ENCODE measurements at regions of chr5 and their contacts with region 1.

Region 1: GRCh38 chr5:95846554-95847260 is 24.2 kb upstream of the GLRX start:
- DNase-seq: peak; percentile 54 to 75 (median 74)
- H3K4me3 ChIP-seq: no peak overlapping the region
- H3K4me3 Mint-ChIP-seq: no peak overlapping the region
- H3K27ac ChIP-seq: no peak overlapping the region
- H3K27ac Mint-ChIP-seq: peak overlapping the region in 1 of 7 donors; percentile 40
- H3K4me1 ChIP-seq: peaks cover 26 to 28% of the 10 kb centered on the region in 2 donors
- H3K4me1 Mint-ChIP-seq: peaks cover 39% of the 10 kb centered on the region
- H3K27me3 ChIP-seq: no peaks in the 10 kb centered on the region
- H3K27me3 Mint-ChIP-seq: peaks cover 0 to 2% (median 1%) of the 10 kb centered on the region in 3 donors
- CTCF ChIP-seq: peak; percentile 93

Region 2: DNA sequence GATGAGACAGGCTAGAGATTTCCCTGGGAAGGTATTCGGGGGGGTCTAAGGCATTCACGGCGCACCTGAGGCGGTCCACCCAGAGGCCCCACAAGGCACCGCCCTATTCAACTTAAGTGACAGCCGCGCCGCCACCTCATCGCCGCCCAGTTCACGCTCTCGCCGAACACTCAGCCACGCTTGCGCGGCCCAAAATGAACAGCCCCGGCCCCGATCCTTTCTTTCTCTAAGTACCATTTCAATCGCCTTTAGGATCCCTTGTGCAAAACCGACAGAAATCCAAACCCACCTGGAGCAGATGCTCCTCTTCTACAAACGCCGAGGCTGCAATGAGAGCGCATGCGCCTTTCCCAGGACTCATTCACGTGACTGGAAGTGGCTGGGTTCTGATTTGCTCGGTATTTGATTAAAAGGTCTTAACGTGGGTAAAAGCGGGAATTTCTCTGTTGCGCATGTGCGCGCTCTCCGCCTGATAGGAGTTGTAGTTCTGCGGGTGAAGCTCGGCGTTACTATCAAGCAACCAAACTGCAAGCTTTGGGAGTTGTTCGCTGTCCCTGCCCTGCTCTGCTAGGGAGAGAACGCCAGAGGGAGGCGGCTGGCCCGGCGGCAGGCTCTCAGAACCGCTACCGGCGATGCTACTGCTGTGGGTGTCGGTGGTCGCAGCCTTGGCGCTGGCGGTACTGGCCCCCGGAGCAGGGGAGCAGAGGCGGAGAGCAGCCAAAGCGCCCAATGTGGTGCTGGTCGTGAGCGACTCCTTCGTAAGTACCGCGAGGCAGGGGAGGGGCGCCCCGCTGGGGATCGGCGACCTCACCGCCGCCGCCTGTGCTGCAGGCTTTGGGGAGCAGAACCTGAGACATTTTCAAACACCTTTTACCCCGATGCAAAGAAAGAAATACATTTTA is 291.8 kb before region 1 on chr5 and contains the starts of genes ARSK and SKIC3:
- intact Hi-C with region 1: loop called in 1 of 2 experiments (anchors 5 kb)
- DNase-seq: peak; percentile 96 to 98 (median 96)
- H3K4me3 ChIP-seq: peak within 1 kb of the TSS; percentile 60 to 85 (median 65)
- H3K4me3 Mint-ChIP-seq: peak within 1 kb of the TSS; percentile 92 to 96
- H3K27ac ChIP-seq: peak within 1 kb of the TSS; percentile 71 to 75
- H3K27ac Mint-ChIP-seq: peak within 1 kb of the TSS; percentile 82 to 98 (median 90)
- H3K4me1 ChIP-seq: peaks cover 20 to 25% of the 10 kb centered on the region in 2 donors
- H3K4me1 Mint-ChIP-seq: peaks cover 29% of the 10 kb centered on the region
- H3K27me3 ChIP-seq: no peaks in the 10 kb centered on the region
- H3K27me3 Mint-ChIP-seq: no peaks in the 10 kb centered on the region
- CTCF ChIP-seq: peak; percentile 21
- polyA plus RNA-seq, gene ARSK: 0.67 to 1.3 (median 1.3) TPM
- polyA plus RNA-seq, gene SKIC3: 13.7 to 24.6 (median 17.6) TPM

Region 3: GRCh38 chr5:95646554-95647431 is 199.9 kb before region 1 on chr5 and contains the start of gene RFESD:
- intact Hi-C with region 1: loop called (anchors 5 kb)
- DNase-seq: peak; percentile 96 to 97 (median 97)
- H3K4me3 ChIP-seq: peak within 1 kb of the TSS; percentile 47 to 82 (median 50)
- H3K4me3 Mint-ChIP-seq: peak within 1 kb of the TSS; percentile 84 to 89
- H3K27ac ChIP-seq: peak within 1 kb of the TSS; percentile 49 to 82
- H3K27ac Mint-ChIP-seq: peak within 1 kb of the TSS; percentile 78 to 92 (median 86)
- H3K4me1 ChIP-seq: peaks cover 12 to 15% of the 10 kb centered on the region in 2 donors
- H3K4me1 Mint-ChIP-seq: peaks cover 13% of the 10 kb centered on the region
- H3K27me3 ChIP-seq: no peaks in the 10 kb centered on the region
- H3K27me3 Mint-ChIP-seq: peaks cover 0 to 1% (median 0%) of the 10 kb centered on the region in 3 donors
- CTCF ChIP-seq: no peak
- polyA plus RNA-seq, gene RFESD: 0.15 to 1.4 (median 0.24) TPM

Region 4: DNA sequence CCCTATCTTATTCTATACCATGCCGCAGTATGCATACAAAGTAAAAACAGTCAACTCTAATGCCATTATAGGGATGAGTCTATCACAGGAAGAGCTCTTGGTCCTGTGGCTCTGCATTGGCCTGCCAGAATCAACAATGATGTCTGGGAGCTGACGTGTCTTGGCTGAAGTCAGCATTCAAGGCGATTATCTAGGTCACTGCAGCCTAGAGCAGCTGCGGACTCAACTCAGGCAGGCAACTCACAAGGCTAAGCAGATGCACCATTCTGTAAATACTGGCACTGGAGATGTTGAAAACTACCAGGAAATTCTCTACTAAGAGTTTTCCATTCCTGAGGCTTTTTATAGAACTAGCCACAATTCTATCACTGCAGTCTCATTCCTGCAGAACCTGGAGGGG is 177.2 kb before region 1 on chr5:
- intact Hi-C with region 1: loop called in 1 of 2 experiments (anchors 5 kb)
- DNase-seq: no peak
- H3K4me3 ChIP-seq: no peak overlapping the region
- H3K4me3 Mint-ChIP-seq: no peak overlapping the region
- H3K27ac ChIP-seq: no peak overlapping the region
- H3K27ac Mint-ChIP-seq: peak overlapping the region in 1 of 7 donors; percentile 68
- H3K4me1 ChIP-seq: peaks cover 7 to 10% of the 10 kb centered on the region in 2 donors
- H3K4me1 Mint-ChIP-seq: peaks cover 11% of the 10 kb centered on the region
- H3K27me3 ChIP-seq: no peaks in the 10 kb centered on the region
- H3K27me3 Mint-ChIP-seq: no peaks in the 10 kb centered on the region
- CTCF ChIP-seq: no peak

Region 5: DNA sequence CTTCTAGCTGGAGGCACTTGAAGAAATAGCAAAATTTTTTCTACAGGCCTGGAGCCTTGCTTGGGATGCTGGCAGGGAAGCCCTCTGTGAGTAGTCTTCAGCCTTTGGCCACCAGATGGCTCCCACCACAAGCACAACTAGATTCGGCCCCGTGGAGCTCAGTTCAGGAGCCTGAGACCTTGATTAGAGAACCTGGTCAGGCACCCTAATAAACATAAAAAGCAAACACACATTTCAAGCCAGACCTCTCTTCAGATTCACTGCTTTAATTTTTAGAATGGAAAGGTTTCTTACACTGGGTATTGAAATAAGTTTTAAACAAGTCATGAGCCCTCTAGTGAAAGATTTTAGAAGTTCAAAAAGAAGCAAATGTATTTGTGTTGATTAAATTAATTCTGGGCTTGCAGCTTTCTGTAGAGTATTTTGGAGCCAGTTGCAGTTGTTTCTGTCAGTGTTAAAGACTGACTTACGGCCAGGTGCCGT is 65.6 kb before region 1 on chr5:
- intact Hi-C with region 1: loop called (anchors 2 kb)
- DNase-seq: peak; percentile 65 to 79 (median 78)
- H3K4me3 ChIP-seq: peak overlapping the region in 1 of 3 experiments; percentile 58
- H3K4me3 Mint-ChIP-seq: peak overlapping the region; percentile 55 to 77
- H3K27ac ChIP-seq: peak overlapping the region in 1 of 2 donors; percentile 66
- H3K27ac Mint-ChIP-seq: peak overlapping the region; percentile 22 to 88 (median 77)
- H3K4me1 ChIP-seq: peaks cover 26 to 31% of the 10 kb centered on the region in 2 donors
- H3K4me1 Mint-ChIP-seq: peaks cover 30% of the 10 kb centered on the region
- H3K27me3 ChIP-seq: no peaks in the 10 kb centered on the region
- H3K27me3 Mint-ChIP-seq: no peaks in the 10 kb centered on the region
- CTCF ChIP-seq: peak; percentile 96

Region 6: GRCh38 chr5:95808686-95809413 is 37.9 kb before region 1 on chr5:
- intact Hi-C with region 1: loop called in 1 of 2 experiments (anchors 5 kb)
- DNase-seq: peak; percentile 79 to 91 (median 83)
- H3K4me3 ChIP-seq: peak overlapping the region in 1 of 3 experiments; percentile 47
- H3K4me3 Mint-ChIP-seq: peak overlapping the region; percentile 29 to 65
- H3K27ac ChIP-seq: peak overlapping the region; percentile 78 to 79
- H3K27ac Mint-ChIP-seq: peak overlapping the region; percentile 85 to 94 (median 92)
- H3K4me1 ChIP-seq: peaks cover 39 to 44% of the 10 kb centered on the region in 2 donors
- H3K4me1 Mint-ChIP-seq: peaks cover 54% of the 10 kb centered on the region
- H3K27me3 ChIP-seq: no peaks in the 10 kb centered on the region
- H3K27me3 Mint-ChIP-seq: peaks cover 0 to 2% (median 0%) of the 10 kb centered on the region in 3 donors
- CTCF ChIP-seq: no peak

Measured in CD14-positive monocyte (primary cell).